Activated CD4-positive, alpha-beta memory T cell treated with anti-CD3 and anti-CD28 coated beads for 36 hours (primary cell): ENCODE measurements at regions of chr2 and their contacts with region 1.

Region 1: GRCh38 chr2:231713730-231714430 is 5.6 kb downstream of the PTMA start:
- DNase-seq: peak; percentile 94
- H3K4me3 Mint-ChIP-seq: peak overlapping the region; percentile 48
- H3K27ac Mint-ChIP-seq: peak overlapping the region; percentile 95
- H3K4me1 Mint-ChIP-seq: peaks cover 23% of the 10 kb centered on the region
- H3K27me3 Mint-ChIP-seq: no peaks in the 10 kb centered on the region

Region 2: GRCh38 chr2:230974096-230974913 is 739.6 kb before region 1 on chr2:
- CTCF ChIA-PET with region 1: no interaction called
- POLR2A ChIA-PET with region 1: no interaction called
- intact Hi-C with region 1: no loop called
- DNase-seq: peak; percentile 87
- H3K4me3 Mint-ChIP-seq: peak overlapping the region; percentile 17
- H3K27ac Mint-ChIP-seq: peak overlapping the region; percentile 85
- H3K4me1 Mint-ChIP-seq: peaks cover 54% of the 10 kb centered on the region
- H3K27me3 Mint-ChIP-seq: peaks cover 15% of the 10 kb centered on the region

Region 3: GRCh38 chr2:231612179-231613053 is 101.5 kb before region 1 on chr2:
- CTCF ChIA-PET with region 1: interaction called, 154 read pairs
- POLR2A ChIA-PET with region 1: interaction called, 98 read pairs
- intact Hi-C with region 1: loop called (anchors 1 kb)
- DNase-seq: peak; percentile 99
- H3K4me3 Mint-ChIP-seq: peak overlapping the region; percentile 74
- H3K27ac Mint-ChIP-seq: peak overlapping the region; percentile 97
- H3K4me1 Mint-ChIP-seq: peaks cover 44% of the 10 kb centered on the region
- H3K27me3 Mint-ChIP-seq: no peaks in the 10 kb centered on the region

Region 4: GRCh38 chr2:231655897-231656296 is 58.0 kb before region 1 on chr2:
- CTCF ChIA-PET with region 1: interaction called, 12 read pairs
- POLR2A ChIA-PET with region 1: interaction called, 8 read pairs
- intact Hi-C with region 1: no loop called
- DNase-seq: no peak
- H3K4me3 Mint-ChIP-seq: no peak overlapping the region
- H3K27ac Mint-ChIP-seq: no peak overlapping the region
- H3K4me1 Mint-ChIP-seq: no peaks in the 10 kb centered on the region
- H3K27me3 Mint-ChIP-seq: no peaks in the 10 kb centered on the region

Region 5: DNA sequence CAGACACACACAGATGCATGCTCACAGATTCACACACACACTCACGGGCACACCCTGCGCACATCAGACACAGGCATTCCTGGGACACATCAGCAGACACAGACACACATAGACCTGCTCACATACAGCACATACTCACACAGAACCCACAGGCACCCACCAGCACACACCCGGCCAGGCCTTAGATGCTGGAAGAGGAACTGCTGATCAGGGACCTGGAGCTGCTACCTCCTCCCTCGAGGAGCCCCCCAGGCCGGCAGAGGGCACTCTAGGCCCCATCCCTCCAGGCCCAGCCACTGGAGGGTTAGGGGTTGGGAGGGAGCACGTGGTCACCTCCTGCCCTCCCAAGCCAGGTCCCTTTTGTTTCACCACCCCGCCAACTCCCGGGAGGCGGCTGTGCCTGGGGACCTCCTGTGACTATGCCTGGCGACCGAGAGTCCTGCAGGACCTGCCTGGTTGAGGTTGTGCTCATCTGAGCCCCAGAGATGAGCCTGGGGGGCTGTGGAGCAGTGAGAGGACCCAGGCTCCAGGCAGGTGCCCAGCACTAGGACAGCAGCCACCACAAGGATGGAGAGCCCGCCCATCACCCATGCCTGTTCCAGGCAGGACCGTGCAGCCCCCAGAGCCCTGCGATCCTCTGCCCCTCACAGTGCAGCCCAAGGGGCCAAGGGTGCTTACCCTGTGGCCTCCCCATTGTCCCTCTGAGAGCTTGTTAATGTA is 26.6 kb before region 1 on chr2:
- CTCF ChIA-PET with region 1: interaction called, 578 read pairs
- POLR2A ChIA-PET with region 1: no interaction called
- intact Hi-C with region 1: loop called (anchors 1 kb)
- DNase-seq: peak; percentile 73
- H3K4me3 Mint-ChIP-seq: no peak overlapping the region
- H3K27ac Mint-ChIP-seq: no peak overlapping the region
- H3K4me1 Mint-ChIP-seq: peaks cover 4% of the 10 kb centered on the region
- H3K27me3 Mint-ChIP-seq: peaks cover 5% of the 10 kb centered on the region

Region 6: DNA sequence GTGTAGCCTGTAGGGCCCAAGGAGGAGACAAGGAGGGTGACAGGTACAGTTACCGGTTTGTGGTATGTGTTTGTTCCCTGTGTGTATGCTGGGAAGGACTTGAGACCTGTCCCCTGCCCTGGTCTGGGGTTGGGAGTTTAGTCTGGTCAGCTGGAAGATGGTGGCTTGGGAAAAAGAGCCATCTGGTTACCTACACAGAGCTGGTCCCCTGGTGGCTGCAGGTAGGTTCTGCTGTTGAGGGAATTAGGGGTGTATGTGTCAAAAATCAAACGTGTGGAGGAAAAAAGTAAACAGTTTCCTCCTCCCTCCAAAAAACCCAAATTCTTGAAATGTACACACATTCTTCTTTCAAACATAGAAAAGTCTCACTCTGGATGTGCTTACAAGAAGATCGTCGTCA is 18.7 kb after region 1 on chr2:
- CTCF ChIA-PET with region 1: interaction called, 14 read pairs
- POLR2A ChIA-PET with region 1: no interaction called
- intact Hi-C with region 1: no loop called
- DNase-seq: no peak
- H3K4me3 Mint-ChIP-seq: no peak overlapping the region
- H3K27ac Mint-ChIP-seq: no peak overlapping the region
- H3K4me1 Mint-ChIP-seq: no peaks in the 10 kb centered on the region
- H3K27me3 Mint-ChIP-seq: no peaks in the 10 kb centered on the region

Region 7: GRCh38 chr2:231810905-231811304 is 97.0 kb after region 1 on chr2:
- CTCF ChIA-PET with region 1: no interaction called
- POLR2A ChIA-PET with region 1: no interaction called
- intact Hi-C with region 1: no loop called
- DNase-seq: no peak
- H3K4me3 Mint-ChIP-seq: no peak overlapping the region
- H3K27ac Mint-ChIP-seq: no peak overlapping the region
- H3K4me1 Mint-ChIP-seq: no peaks in the 10 kb centered on the region
- H3K27me3 Mint-ChIP-seq: no peaks in the 10 kb centered on the region

Region 8: GRCh38 chr2:232668805-232669444 is 955.0 kb after region 1 on chr2:
- CTCF ChIA-PET with region 1: no interaction called
- POLR2A ChIA-PET with region 1: no interaction called
- intact Hi-C with region 1: no loop called
- DNase-seq: no peak
- H3K4me3 Mint-ChIP-seq: no peak overlapping the region
- H3K27ac Mint-ChIP-seq: no peak overlapping the region
- H3K4me1 Mint-ChIP-seq: no peaks in the 10 kb centered on the region
- H3K27me3 Mint-ChIP-seq: peaks cover 4% of the 10 kb centered on the region